Naive thymus-derived CD4-positive, alpha-beta T cell (primary cell): ENCODE measurements at regions of chr11 and their contacts with region 1.

Region 1: DNA sequence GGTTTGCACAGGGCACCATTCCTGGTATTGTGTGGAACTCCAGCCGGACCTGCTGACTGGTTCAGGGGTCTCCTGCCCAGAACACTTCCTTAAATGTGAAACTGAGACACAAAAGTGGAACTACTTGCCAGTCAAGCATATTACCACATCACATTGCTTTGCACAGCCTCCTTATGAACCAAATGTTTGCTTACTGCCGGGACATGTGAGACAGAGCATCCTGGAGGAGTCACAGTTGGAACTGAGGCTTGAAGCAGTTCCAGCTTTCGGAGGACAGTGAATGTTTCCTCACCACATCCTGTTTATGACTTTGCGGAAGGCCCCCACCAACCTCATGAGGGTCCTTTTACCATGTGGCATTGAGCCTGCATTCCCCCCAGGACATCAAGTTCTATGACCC is 105.8 kb upstream of the ARHGAP42 start:
- DNase-seq: no peak
- ATAC-seq: no peak
- H3K4me3 ChIP-seq: no peak overlapping the region
- H3K4me3 Mint-ChIP-seq: no peak overlapping the region
- H3K27ac ChIP-seq: no peak overlapping the region
- H3K27ac Mint-ChIP-seq: no peak overlapping the region
- H3K4me1 ChIP-seq: no peaks in the 10 kb centered on the region
- H3K4me1 Mint-ChIP-seq: no peaks in the 10 kb centered on the region
- H3K27me3 ChIP-seq: no peaks in the 10 kb centered on the region
- H3K27me3 Mint-ChIP-seq: peaks cover 0 to 5% (median 0%) of the 10 kb centered on the region in 5 donors

Region 2: DNA sequence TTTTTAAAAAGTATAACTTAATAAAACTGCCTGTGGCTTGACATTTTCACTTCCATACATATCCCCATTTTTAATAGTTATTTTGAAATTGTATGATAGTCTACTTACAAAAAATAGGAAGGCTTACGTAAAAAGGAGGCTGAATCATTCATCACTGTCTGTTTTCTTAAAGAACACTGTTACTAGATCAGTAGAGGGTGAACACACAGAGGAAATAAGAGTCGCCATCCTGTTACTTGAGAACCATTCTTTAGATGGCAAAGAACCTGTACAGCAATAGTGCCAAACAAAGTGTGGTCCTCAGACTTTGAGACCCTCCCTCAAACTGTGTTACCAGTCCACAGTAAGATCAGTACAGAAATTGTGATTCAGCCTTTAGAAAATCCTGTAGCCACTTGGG is 367.6 kb after region 1 on chr11:
- CTCF ChIA-PET with region 1: no interaction called
- POLR2A ChIA-PET with region 1: no interaction called
- intact Hi-C with region 1: loop called in 1 of 2 experiments (anchors 5 kb)
- DNase-seq: no peak
- ATAC-seq: no peak
- H3K4me3 ChIP-seq: no peak overlapping the region
- H3K4me3 Mint-ChIP-seq: no peak overlapping the region
- H3K27ac ChIP-seq: no peak overlapping the region
- H3K27ac Mint-ChIP-seq: no peak overlapping the region
- H3K4me1 ChIP-seq: no peaks in the 10 kb centered on the region
- H3K4me1 Mint-ChIP-seq: no peaks in the 10 kb centered on the region
- H3K27me3 ChIP-seq: no peaks in the 10 kb centered on the region
- H3K27me3 Mint-ChIP-seq: no peaks in the 10 kb centered on the region